CD4-positive, alpha-beta T cell (primary cell): ENCODE measurements at regions of chr9 and their contacts with region 1.

Region 1: DNA sequence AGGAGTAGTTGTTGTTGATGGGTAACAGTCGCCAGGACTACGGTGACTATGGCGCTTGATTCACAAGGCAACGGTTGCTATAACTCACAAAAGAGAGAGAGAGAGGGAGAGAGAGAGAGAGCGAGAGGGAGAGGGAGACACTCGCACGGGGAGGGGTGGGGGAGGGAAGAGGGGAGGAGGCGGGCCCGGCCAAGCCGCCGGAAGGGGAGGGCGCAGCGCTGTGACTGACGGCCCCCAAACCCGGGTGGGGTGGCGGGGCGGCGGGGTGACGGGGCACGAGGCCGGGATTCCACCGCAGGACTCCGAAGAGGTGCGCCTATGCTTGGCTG is at the start of gene RFX3:
- DNase-seq: peak; percentile 88 to 98 (median 92)
- ATAC-seq: peak; percentile 55
- H3K4me3 ChIP-seq: peak within 1 kb of the TSS; percentile 82
- H3K4me3 Mint-ChIP-seq: peak within 1 kb of the TSS; percentile 91
- H3K27ac ChIP-seq: peak within 1 kb of the TSS; percentile 100
- H3K27ac Mint-ChIP-seq: peak within 1 kb of the TSS; percentile 99
- H3K4me1 ChIP-seq: peaks cover 24% of the 10 kb centered on the region
- H3K4me1 Mint-ChIP-seq: peaks cover 74% of the 10 kb centered on the region
- H3K27me3 ChIP-seq: no peaks in the 10 kb centered on the region
- H3K27me3 Mint-ChIP-seq: peaks cover 5% of the 10 kb centered on the region
- CTCF ChIP-seq: no peak
- total RNA-seq, gene RFX3: 22.9 to 24.8 TPM

Region 2: DNA sequence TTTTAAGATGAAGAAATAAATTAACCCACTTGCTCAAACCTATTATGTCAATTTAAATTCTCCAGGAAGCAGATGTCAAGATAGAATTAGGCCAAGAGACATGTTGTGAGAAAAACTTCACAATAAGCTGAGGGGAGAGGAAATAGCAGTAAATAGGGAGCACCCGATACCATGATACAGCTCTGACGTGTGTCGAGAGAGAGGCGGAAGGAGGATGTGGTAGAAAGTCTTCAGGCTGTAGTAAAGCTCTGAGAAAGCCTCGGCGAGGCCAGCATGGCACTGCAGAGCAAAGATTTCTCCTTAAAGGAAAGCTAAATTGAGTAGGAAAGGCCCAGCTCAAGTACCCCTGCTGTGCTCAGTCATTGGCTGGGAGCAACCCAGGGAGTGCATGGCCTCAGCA is 675.9 kb before region 1 on chr9:
- CTCF ChIA-PET with region 1: no interaction called
- POLR2A ChIA-PET with region 1: interaction called, 3 read pairs
- intact Hi-C with region 1: loop called (anchors 2 to 10 kb)
- DNase-seq: peak in 4 of 14 experiments; percentile 4 to 54 (median 28)
- ATAC-seq: peak; percentile 92
- H3K4me3 ChIP-seq: no peak overlapping the region
- H3K4me3 Mint-ChIP-seq: no peak overlapping the region
- H3K27ac ChIP-seq: no peak overlapping the region
- H3K27ac Mint-ChIP-seq: peak overlapping the region; percentile 8
- H3K4me1 ChIP-seq: peaks cover 7% of the 10 kb centered on the region
- H3K4me1 Mint-ChIP-seq: peaks cover 12% of the 10 kb centered on the region
- H3K27me3 ChIP-seq: no peaks in the 10 kb centered on the region
- H3K27me3 Mint-ChIP-seq: peaks cover 23% of the 10 kb centered on the region
- CTCF ChIP-seq: no peak

Region 3: DNA sequence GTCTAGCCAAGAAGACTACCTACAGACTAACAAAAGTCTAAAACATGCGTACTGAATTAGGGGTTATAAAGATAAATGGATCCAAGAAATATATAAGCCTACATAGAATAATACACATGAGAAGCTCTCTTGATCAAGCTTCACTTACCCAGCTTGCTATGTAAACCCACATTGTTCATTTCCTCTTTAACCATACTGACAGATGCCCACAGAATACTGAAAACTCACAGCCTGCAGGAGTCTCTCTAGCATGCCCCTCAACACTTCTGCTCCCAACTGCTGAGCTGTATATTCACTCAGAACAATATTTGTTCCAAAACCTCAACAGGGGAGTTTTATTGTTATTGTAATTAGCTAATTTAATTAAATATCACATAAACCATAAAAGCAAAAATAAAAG is 52.4 kb before region 1 on chr9:
- CTCF ChIA-PET with region 1: interaction called, 5 read pairs
- POLR2A ChIA-PET with region 1: interaction called, 115 read pairs
- intact Hi-C with region 1: loop called in 1 of 2 experiments (anchors 1 kb)
- DNase-seq: no peak
- ATAC-seq: peak; percentile 24
- H3K4me3 ChIP-seq: no peak overlapping the region
- H3K4me3 Mint-ChIP-seq: no peak overlapping the region
- H3K27ac ChIP-seq: no peak overlapping the region
- H3K27ac Mint-ChIP-seq: no peak overlapping the region
- H3K4me1 ChIP-seq: peaks cover 1% of the 10 kb centered on the region
- H3K4me1 Mint-ChIP-seq: peaks cover 51% of the 10 kb centered on the region
- H3K27me3 ChIP-seq: no peaks in the 10 kb centered on the region
- H3K27me3 Mint-ChIP-seq: no peaks in the 10 kb centered on the region
- CTCF ChIP-seq: no peak

Region 4: DNA sequence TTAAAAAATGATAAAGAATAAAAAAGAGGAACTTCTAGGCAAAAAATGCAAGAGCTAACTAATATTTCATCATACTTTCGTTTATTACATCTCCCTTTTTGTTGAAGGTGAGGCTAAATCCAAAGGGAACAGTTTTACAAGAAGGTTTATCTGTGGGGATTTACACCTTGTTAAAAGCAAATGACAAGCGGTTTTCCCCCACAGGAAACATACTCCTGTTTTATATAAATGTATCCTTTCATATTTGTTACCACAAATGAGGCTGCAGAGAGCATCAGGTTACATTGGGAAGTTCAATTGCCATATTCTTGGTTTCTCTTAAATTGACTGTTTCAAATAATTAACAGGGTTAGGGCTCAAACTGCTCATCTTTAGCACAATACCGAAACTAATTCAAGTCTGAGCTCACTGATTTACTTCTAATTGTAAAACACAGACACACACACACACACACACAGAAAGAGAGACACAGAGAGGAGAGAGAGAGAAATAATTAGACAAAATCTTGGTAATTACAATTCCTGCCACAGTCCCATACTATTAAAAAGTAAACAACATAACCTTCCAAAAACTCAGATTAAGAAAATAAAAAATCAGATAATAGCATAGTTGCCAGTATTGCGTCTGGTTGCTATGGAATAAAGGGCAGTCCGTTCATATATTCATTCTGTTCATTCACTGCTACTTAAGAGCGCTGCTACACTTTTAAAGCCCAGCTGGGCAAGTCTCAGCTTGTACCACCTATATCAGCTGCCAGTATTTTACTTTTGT is 17.1 kb before region 1 on chr9:
- CTCF ChIA-PET with region 1: interaction called, 5 read pairs
- POLR2A ChIA-PET with region 1: interaction called, 13 read pairs
- intact Hi-C with region 1: loop called in 1 of 2 experiments (anchors 2 kb)
- DNase-seq: peak in 1 of 14 experiments; percentile 14
- ATAC-seq: no peak
- H3K4me3 ChIP-seq: no peak overlapping the region
- H3K4me3 Mint-ChIP-seq: no peak overlapping the region
- H3K27ac ChIP-seq: no peak overlapping the region
- H3K27ac Mint-ChIP-seq: peak overlapping the region; percentile 10
- H3K4me1 ChIP-seq: no peaks in the 10 kb centered on the region
- H3K4me1 Mint-ChIP-seq: peaks cover 54% of the 10 kb centered on the region
- H3K27me3 ChIP-seq: no peaks in the 10 kb centered on the region
- H3K27me3 Mint-ChIP-seq: no peaks in the 10 kb centered on the region
- CTCF ChIP-seq: no peak

Region 5: GRCh38 chr9:4596165-4596922 is 1070.5 kb after region 1 on chr9:
- CTCF ChIA-PET with region 1: no interaction called
- POLR2A ChIA-PET with region 1: interaction called, 16 read pairs
- intact Hi-C with region 1: no loop called
- DNase-seq: peak; percentile 30 to 86 (median 55)
- ATAC-seq: peak; percentile 91
- H3K4me3 ChIP-seq: no peak overlapping the region
- H3K4me3 Mint-ChIP-seq: peak overlapping the region; percentile 62
- H3K27ac ChIP-seq: peak overlapping the region; percentile 25 to 73
- H3K27ac Mint-ChIP-seq: peak overlapping the region; percentile 94
- H3K4me1 ChIP-seq: peaks cover 39% of the 10 kb centered on the region
- H3K4me1 Mint-ChIP-seq: peaks cover 72% of the 10 kb centered on the region
- H3K27me3 ChIP-seq: no peaks in the 10 kb centered on the region
- H3K27me3 Mint-ChIP-seq: no peaks in the 10 kb centered on the region
- CTCF ChIP-seq: peak; percentile 50

Region 6: DNA sequence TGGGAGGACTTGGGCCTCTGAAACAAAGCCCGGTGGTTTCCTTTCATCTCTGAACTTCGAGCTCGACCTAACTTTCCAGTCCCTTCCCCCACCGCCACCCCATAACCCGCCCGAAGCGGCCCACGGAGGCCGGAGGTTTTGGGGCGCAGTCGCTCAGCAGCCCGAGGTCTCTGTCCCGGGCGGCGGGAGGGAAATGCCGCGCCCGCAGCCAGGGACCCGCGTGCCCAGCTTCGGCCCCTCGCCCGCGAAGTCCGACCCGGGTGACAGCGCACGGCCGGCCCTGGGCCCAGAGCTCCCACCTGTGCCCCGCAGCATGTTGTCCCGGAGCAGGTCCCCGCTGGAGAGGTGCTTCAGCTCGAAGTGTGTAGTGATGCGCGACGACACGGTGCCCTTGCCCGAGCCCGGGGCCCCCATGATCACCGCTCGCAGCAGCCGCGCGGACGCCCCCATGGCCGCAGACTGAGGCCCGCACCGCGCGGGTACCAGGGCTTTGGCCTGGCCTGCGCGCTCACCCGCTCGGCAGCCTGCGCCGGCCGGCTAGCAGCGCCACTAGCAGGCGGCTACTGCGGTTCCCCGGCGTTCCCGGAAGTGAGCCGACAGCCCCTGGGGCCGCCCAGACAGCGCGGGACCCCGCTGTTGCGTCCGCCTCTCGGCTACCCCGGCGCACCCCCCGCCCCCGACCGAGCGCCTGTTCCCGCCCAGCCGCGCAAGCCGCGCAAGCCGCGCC is 1215.0 kb after region 1 on chr9 and contains the start of gene AK3:
- CTCF ChIA-PET with region 1: no interaction called
- POLR2A ChIA-PET with region 1: interaction called, 20 read pairs
- intact Hi-C with region 1: no loop called
- DNase-seq: peak; percentile 61 to 94 (median 80)
- ATAC-seq: peak; percentile 92
- H3K4me3 ChIP-seq: peak within 1 kb of the TSS; percentile 86
- H3K4me3 Mint-ChIP-seq: peak within 1 kb of the TSS; percentile 97
- H3K27ac ChIP-seq: peak within 1 kb of the TSS; percentile 57 to 66
- H3K27ac Mint-ChIP-seq: peak within 1 kb of the TSS; percentile 83
- H3K4me1 ChIP-seq: peaks cover 28% of the 10 kb centered on the region
- H3K4me1 Mint-ChIP-seq: peaks cover 36% of the 10 kb centered on the region
- H3K27me3 ChIP-seq: no peaks in the 10 kb centered on the region
- H3K27me3 Mint-ChIP-seq: no peaks in the 10 kb centered on the region
- CTCF ChIP-seq: no peak
- total RNA-seq, gene AK3: 19.9 to 20.9 TPM